ENCODE measurements at regions of chr7 and their contacts with region 1.

Region 1: DNA sequence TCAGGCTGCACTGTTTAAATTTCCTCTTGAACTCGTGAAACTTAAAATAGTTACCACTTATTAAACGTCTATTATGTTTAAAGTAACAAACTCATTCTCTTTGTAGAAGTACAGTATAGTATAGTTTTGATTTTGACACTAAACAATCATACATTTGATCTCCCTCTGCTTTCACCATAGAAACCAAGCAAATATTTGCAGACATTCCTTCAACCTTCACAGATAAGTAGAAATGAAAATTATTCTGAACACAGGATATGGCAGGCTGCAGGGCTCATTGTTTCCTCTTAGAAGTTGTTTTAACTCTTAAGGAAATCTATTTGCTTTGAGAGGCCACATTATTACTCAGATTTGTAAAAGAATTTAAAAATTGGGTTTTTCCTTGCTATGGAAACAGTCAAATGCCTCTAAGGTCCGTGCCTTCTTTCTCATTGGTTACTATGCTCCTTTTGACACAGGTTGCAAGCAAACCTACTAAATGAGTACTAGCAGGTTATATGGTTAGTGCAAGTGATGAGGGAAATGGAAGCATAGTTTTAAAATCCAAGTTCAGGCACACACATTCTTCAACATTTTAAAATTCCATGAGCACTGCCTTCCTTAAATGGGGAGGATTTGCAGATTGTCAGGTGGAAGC is 92.8 kb upstream of the FAM133B start:
- DNase-seq: peak in 7 of 9 donors; percentile 20 to 62 (median 46)
- ATAC-seq: peak; percentile 70
- H3K4me3 ChIP-seq: no peak overlapping the region
- H3K4me3 Mint-ChIP-seq: peak overlapping the region; percentile 22 to 66 (median 58)
- H3K27ac ChIP-seq: peak overlapping the region; percentile 70
- H3K27ac Mint-ChIP-seq: peak overlapping the region; percentile 27 to 87 (median 81)
- H3K4me1 ChIP-seq: peaks cover 32 to 54% of the 10 kb centered on the region in 2 donors
- H3K4me1 Mint-ChIP-seq: peaks cover 51 to 89% (median 86%) of the 10 kb centered on the region in 7 donors
- H3K27me3 ChIP-seq: no peaks in the 10 kb centered on the region
- H3K27me3 Mint-ChIP-seq: no peaks in the 10 kb centered on the region

Region 2: GRCh38 chr7:92633211-92633906 is 49.7 kb before region 1 on chr7:
- CTCF ChIA-PET with region 1: no interaction called
- POLR2A ChIA-PET with region 1: no interaction called
- intact Hi-C with region 1: loop called in 1 of 2 experiments (anchors 1 kb)
- DNase-seq: peak in 1 of 9 donors; percentile 13
- ATAC-seq: peak; percentile 76
- H3K4me3 ChIP-seq: no peak overlapping the region
- H3K4me3 Mint-ChIP-seq: peak overlapping the region in 3 of 10 donors; percentile 23 to 70 (median 57)
- H3K27ac ChIP-seq: no peak overlapping the region
- H3K27ac Mint-ChIP-seq: peak overlapping the region in 3 of 9 donors; percentile 50 to 87 (median 53)
- H3K4me1 ChIP-seq: peaks cover 3 to 18% of the 10 kb centered on the region in 2 donors
- H3K4me1 Mint-ChIP-seq: peaks cover 20 to 56% (median 34%) of the 10 kb centered on the region in 7 donors
- H3K27me3 ChIP-seq: no peaks in the 10 kb centered on the region
- H3K27me3 Mint-ChIP-seq: no peaks in the 10 kb centered on the region

Region 3: DNA sequence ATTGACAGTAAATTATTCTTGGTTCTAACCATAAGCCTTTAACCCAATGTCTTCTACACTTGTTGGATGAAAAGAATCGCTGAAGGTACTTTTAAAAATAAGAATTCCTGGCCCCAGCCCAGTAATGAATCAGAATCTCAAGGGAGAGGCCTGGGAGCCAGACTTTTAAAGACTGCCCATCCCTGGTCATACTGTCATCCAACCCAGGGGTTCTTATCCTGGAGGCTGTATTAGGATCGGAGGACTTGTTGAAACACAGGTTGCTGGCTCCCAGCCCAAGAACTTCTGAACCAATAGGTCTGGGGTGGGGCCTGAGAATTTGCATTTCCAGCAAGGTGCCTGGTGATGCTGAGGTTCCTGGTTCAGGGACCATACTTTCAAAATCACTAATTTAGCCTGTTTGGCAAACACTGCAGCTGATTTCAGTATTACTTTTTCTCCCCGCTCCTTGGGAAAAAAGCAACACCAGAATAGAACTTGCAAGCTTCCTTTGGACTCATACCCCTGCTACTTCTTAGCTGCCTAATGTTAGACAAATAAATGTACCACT is 13.3 kb before region 1 on chr7:
- CTCF ChIA-PET with region 1: no interaction called
- POLR2A ChIA-PET with region 1: interaction called, 3 read pairs
- intact Hi-C with region 1: loop called (anchors 1 to 2 kb)
- DNase-seq: no peak
- ATAC-seq: no peak
- H3K4me3 ChIP-seq: no peak overlapping the region
- H3K4me3 Mint-ChIP-seq: peak overlapping the region in 1 of 10 donors; percentile 23
- H3K27ac ChIP-seq: no peak overlapping the region
- H3K27ac Mint-ChIP-seq: peak overlapping the region in 2 of 9 donors; percentile 52 to 53
- H3K4me1 ChIP-seq: no peaks in the 10 kb centered on the region
- H3K4me1 Mint-ChIP-seq: peaks cover 9 to 72% (median 18%) of the 10 kb centered on the region in 7 donors
- H3K27me3 ChIP-seq: no peaks in the 10 kb centered on the region
- H3K27me3 Mint-ChIP-seq: no peaks in the 10 kb centered on the region

Region 4: DNA sequence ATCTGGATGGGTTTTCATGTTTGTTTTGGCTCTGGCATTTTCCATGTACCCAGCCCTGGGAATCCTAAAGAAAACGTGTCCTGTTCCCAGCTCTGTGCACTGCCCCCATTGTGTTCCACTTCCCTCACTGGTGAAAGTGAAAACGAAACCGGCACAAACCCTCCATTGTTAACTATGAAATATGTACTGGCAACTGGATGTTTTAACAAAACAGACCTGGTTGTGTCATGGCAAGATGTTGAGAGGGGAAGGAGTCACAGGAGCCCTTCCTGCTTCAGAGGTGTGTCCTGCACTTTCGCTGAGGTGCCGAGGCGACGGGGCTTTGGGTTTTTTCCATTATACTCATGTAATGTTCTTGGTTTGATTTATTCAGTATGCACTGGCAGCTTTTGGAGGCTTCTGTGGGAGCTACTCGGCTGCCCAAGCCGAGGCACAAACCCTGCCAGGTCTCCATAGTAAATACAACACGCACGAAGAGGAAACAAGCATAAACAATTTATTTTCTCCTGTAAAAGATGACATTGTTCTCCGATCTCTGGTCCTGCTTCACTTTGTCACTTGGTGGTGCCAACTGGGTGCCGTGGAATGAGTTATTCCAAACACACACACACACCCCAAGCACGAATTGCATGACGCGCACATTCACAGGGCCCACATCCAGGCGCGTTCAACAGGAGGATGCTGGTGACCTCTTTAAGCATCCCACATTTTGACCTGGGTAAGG is 35.1 kb after region 1 on chr7:
- CTCF ChIA-PET with region 1: no interaction called
- POLR2A ChIA-PET with region 1: no interaction called
- intact Hi-C with region 1: loop called in 1 of 2 experiments (anchors 1 kb)
- DNase-seq: peak in 8 of 9 donors; percentile 45 to 73 (median 62)
- ATAC-seq: peak; percentile 91
- H3K4me3 ChIP-seq: peak overlapping the region; percentile 62
- H3K4me3 Mint-ChIP-seq: peak overlapping the region; percentile 84 to 96 (median 94)
- H3K27ac ChIP-seq: peak overlapping the region; percentile 49
- H3K27ac Mint-ChIP-seq: peak overlapping the region; percentile 88 to 99 (median 96)
- H3K4me1 ChIP-seq: peaks cover 10 to 14% of the 10 kb centered on the region in 2 donors
- H3K4me1 Mint-ChIP-seq: peaks cover 26 to 73% (median 40%) of the 10 kb centered on the region in 7 donors
- H3K27me3 ChIP-seq: no peaks in the 10 kb centered on the region
- H3K27me3 Mint-ChIP-seq: no peaks in the 10 kb centered on the region

Region 5: DNA sequence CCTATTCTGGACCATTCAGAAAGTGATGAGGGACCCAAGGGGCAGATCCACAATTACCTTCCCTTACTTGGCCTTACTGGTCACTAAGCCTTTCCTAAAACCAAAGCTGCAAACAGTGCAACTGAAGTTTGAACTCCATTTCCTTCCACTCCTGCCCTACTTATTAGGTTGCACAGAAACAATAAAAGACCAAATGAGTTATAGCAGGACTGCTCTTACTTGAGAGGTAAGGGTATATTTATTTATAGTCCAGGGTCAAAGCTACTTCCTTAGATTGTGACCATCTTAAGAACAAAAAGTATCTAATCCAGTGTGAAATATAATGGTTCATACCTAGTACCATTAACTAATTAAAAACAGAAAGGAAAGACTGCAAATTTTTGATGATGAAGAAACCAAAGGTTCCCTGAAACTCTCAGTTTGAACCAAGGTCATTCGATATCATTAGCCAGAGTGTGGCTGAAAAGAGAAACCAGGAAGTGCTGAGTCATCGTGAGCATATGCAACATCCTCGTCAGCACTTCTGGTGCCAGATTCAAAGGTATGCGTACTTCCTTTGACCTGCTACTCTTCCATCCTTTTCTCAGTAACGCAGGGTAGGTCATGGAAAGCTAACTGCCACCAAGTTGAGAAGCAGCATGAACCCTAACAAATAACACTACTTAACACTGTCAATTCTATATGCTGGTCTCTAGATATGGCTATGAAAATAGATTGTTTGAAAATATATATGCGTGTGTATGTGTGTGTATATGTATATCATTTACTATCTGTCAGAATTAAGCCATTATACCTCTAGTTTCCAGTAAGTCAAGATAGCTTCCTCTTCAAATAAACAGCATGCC is 126.6 kb after region 1 on chr7:
- CTCF ChIA-PET with region 1: no interaction called
- POLR2A ChIA-PET with region 1: no interaction called
- intact Hi-C with region 1: loop called in 1 of 2 experiments (anchors 1 kb)
- DNase-seq: peak in 7 of 9 donors; percentile 27 to 49 (median 41)
- ATAC-seq: peak; percentile 82
- H3K4me3 ChIP-seq: peak overlapping the region; percentile 11
- H3K4me3 Mint-ChIP-seq: peak overlapping the region in 9 of 10 donors; percentile 2 to 70 (median 41)
- H3K27ac ChIP-seq: no peak overlapping the region
- H3K27ac Mint-ChIP-seq: peak overlapping the region in 4 of 9 donors; percentile 27 to 92 (median 55)
- H3K4me1 ChIP-seq: peaks cover 18 to 30% of the 10 kb centered on the region in 2 donors
- H3K4me1 Mint-ChIP-seq: peaks cover 29 to 79% (median 42%) of the 10 kb centered on the region in 7 donors
- H3K27me3 ChIP-seq: no peaks in the 10 kb centered on the region
- H3K27me3 Mint-ChIP-seq: no peaks in the 10 kb centered on the region

Region 6: DNA sequence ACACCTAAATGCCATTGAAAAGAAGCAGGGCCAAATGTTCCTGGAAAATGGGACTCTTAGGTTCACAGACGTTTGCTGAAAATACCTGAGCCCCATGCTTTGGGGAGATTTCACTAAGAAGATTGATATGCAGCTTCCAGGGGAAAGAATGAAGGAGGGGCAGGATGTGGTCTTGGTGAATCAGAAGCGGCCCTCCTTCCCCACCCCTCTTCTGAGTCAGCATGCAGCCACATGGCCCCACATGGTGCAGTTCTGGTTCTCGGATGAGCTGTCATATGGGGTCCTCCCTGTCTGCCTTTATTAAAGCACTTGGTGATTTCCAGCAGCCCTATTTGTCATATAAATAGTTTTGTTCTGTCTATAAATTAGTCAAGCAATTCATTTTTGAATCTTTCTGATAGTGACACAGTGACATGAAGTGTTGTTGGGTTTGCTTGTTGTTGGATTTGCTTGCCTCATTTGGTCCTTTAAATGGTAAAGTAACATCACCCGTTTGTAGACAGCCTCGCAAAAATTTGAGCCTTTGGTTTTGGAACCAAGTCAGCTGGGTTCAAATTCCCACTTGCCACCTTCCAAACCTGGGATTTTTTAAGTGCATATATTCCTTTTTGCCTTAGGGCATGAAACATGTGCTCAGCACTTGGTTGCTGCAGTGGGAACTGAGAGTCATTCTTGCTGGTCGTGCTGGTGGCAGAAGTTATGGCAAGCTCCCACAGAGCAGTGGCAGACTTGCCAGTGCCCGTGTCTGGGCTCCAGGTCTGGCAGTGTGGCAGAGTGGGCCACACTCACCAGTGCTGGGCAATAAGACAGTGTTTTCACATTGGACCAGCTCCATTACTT is 221.5 kb after region 1 on chr7:
- CTCF ChIA-PET with region 1: no interaction called
- POLR2A ChIA-PET with region 1: no interaction called
- intact Hi-C with region 1: loop called in 1 of 2 experiments (anchors 5 kb)
- DNase-seq: peak in 8 of 9 donors; percentile 21 to 80 (median 42)
- ATAC-seq: peak; percentile 99
- H3K4me3 ChIP-seq: no peak overlapping the region
- H3K4me3 Mint-ChIP-seq: peak overlapping the region in 1 of 10 donors; percentile 44
- H3K27ac ChIP-seq: no peak overlapping the region
- H3K27ac Mint-ChIP-seq: peak overlapping the region in 2 of 9 donors; percentile 39 to 83
- H3K4me1 ChIP-seq: peaks cover 0 to 7% of the 10 kb centered on the region in 2 donors
- H3K4me1 Mint-ChIP-seq: peaks cover 0 to 23% (median 12%) of the 10 kb centered on the region in 7 donors
- H3K27me3 ChIP-seq: no peaks in the 10 kb centered on the region
- H3K27me3 Mint-ChIP-seq: peaks cover 0 to 5% (median 0%) of the 10 kb centered on the region in 5 donors

Region 7: GRCh38 chr7:93036807-93037206 is 353.8 kb after region 1 on chr7:
- CTCF ChIA-PET with region 1: no interaction called
- POLR2A ChIA-PET with region 1: no interaction called
- intact Hi-C with region 1: loop called in 1 of 2 experiments (anchors 5 kb)
- DNase-seq: no peak
- ATAC-seq: peak; percentile 36
- H3K4me3 ChIP-seq: no peak overlapping the region
- H3K4me3 Mint-ChIP-seq: peak overlapping the region in 2 of 10 donors; percentile 9 to 16
- H3K27ac ChIP-seq: no peak overlapping the region
- H3K27ac Mint-ChIP-seq: peak overlapping the region in 3 of 9 donors; percentile 6 to 78 (median 49)
- H3K4me1 ChIP-seq: peaks cover 0 to 7% of the 10 kb centered on the region in 2 donors
- H3K4me1 Mint-ChIP-seq: peaks cover 0 to 30% (median 13%) of the 10 kb centered on the region in 7 donors
- H3K27me3 ChIP-seq: no peaks in the 10 kb centered on the region
- H3K27me3 Mint-ChIP-seq: no peaks in the 10 kb centered on the region

Measured in naive thymus-derived CD4-positive, alpha-beta T cell (primary cell).